Left lung (tissue), 14 donors: ENCODE measurements at regions of chr5 and their contacts with region 1.

Region 1: DNA sequence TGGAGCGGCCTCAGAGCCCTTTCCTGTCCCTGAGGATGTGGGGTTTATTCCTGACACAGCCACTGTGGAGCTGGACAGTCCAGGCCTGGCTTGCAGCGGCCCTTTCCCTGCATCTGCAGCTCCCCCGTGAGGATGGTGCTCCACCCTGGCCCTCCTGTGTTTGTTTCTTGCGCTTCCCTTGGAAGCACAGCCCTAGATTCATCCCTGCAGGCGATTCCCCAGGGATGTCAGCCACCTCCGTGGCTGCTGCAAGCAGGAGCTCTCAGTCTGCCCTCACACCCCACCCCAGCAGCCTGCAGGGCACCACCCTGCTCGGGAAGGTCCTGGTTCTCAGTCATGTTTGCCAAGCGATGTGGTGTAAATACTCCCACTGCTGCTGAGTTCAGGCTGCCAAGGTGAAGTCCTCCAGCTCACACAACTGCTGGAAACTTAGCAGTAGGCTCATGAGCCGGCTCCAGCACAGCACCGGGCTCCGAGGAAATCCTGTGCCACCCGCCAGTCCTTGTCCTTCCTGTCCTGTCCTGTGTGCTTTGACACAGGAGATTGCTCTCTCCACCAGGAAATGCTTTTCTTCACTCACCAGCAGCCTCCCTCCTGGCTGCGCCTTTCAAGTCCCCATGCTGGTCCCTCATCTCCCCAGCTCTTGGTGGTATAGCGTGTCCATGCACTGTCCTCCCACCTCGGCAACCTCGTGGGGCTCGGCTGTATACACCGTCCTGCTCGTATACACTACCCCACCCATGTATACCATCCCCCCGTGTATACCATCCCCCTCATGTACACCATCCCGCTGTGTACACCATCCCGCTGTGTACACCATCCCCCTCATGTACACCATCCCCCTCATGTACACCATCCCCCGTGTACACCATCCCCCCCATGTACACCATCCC is 16.2 kb downstream of the ROPN1L start:
- DNase-seq: peak in 1 of 4 donors; percentile 42
- ATAC-seq: peak; percentile 47
- H3K4me3 ChIP-seq: no peak overlapping the region
- H3K27ac ChIP-seq: no peak overlapping the region
- H3K4me1 ChIP-seq: peaks cover 11 to 40% of the 10 kb centered on the region in 2 donors
- H3K27me3 ChIP-seq: no peaks in the 10 kb centered on the region
- CTCF ChIP-seq: no peak

Region 2: DNA sequence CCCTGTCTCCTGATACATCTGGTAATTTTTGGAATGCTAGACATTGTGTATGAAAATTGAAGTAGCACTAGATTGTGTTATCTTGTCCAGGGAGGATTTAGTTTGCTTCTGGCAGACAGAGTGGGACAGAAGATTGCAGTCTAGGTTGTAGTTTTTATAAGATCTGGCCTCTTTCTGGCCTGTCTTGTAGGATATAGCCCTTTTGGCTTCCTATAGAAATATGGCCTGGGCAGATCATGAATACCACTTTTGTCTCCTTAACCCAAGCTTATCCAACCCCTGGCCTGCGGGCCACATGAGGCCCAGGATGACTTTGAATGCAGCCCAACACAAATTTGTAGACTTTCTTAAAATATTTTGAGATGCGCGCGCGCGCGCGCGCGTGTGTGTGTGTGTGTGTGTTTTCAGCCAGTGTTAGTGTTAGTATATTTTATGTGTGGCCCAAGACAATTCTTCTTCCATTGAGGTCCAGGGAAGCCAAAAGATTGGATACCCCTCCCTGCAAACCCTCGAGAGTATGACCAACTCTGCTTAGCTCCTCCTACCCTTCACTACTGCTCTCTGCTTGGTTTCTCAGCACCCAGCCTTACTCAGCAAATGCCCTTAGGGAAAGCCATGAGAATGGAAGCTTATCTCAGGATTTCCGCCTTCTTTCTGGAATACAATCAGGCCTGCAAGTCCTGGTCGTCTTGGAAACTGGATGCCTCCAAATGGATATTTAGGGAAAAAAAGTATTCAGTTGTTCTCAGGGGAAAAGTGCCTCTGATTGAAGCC is 132.5 kb after region 1 on chr5:
- intact Hi-C with region 1: no loop called
- DNase-seq: no peak
- ATAC-seq: peak; percentile 32
- H3K4me3 ChIP-seq: no peak overlapping the region
- H3K27ac ChIP-seq: no peak overlapping the region
- H3K4me1 ChIP-seq: peaks cover 0 to 10% of the 10 kb centered on the region in 2 donors
- H3K27me3 ChIP-seq: no peaks in the 10 kb centered on the region
- CTCF ChIP-seq: no peak

Region 3: GRCh38 chr5:10627160-10627701 is 169.3 kb after region 1 on chr5:
- intact Hi-C with region 1: loop called in 1 of 2 experiments (anchors 5 kb)
- DNase-seq: peak in 1 of 4 donors; percentile 22
- ATAC-seq: peak; percentile 3
- H3K4me3 ChIP-seq: peak overlapping the region; percentile 17 to 35
- H3K27ac ChIP-seq: peak overlapping the region; percentile 41 to 78
- H3K4me1 ChIP-seq: peaks cover 5 to 49% of the 10 kb centered on the region in 2 donors
- H3K27me3 ChIP-seq: no peaks in the 10 kb centered on the region
- CTCF ChIP-seq: no peak

Region 4: DNA sequence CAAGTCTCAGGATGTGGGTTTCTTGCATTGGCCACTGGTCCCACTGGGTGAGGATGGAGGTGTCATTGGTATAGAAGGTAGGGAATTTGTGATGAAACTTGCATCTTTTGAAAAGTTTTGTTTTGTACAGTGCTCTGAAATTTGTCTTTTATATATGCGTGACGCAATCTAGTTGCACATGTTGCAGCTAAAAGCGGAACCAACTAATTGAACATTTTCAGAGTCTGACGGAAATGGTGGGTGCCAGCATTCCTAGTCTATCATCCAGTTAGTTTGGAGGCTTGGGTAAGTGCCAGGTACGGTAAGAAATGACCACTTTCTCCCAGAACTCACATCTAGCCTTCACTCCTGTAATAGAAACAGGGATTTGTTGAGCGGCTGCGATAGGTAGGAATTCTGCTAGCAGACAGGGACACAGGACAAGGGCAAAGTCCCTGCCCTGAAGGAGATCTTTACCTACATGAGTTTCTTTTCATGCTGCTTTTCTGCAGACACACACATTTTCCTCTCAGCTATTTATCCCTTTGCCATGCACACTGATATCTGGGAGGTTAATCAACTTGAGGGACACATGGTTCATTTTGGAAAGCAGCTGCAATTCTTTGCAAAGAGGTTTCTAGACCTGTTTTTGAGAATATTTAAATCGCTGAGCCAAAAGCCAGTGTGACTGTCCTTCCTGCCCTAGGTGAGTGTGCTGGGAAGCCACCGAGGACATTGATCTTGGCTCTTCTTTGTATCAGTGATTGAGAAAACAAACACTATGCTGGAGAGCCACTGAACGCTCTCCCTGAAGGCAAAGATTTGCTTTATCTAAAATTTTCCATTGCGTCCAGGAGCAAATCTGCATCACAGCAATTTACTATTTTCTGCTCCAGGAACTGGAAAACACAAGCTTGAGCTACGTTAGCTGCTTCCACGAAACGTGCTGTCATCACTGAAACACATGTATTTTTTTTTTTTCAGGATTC is 213.4 kb after region 1 on chr5:
- intact Hi-C with region 1: no loop called
- DNase-seq: peak in 1 of 4 donors; percentile 18
- ATAC-seq: no peak
- H3K4me3 ChIP-seq: no peak overlapping the region
- H3K27ac ChIP-seq: no peak overlapping the region
- H3K4me1 ChIP-seq: peaks cover 0 to 7% of the 10 kb centered on the region in 2 donors
- H3K27me3 ChIP-seq: no peaks in the 10 kb centered on the region
- CTCF ChIP-seq: no peak